PC-3 (cell line): ENCODE measurements at regions of chr5 and their contacts with region 1.

Region 1: GRCh38 chr5:157743163-157744050 is at the start of gene LSM11:
- DNase-seq: peak; percentile 97
- ATAC-seq: peak; percentile 88
- H3K4me3 ChIP-seq: peak within 1 kb of the TSS; percentile 89
- H3K27ac ChIP-seq: no peak within 1 kb of the TSS
- H3K4me1 ChIP-seq: peaks cover 28% of the 10 kb centered on the region
- H3K27me3 ChIP-seq: no peaks in the 10 kb centered on the region
- CTCF ChIP-seq: peak; percentile 100
- total RNA-seq, gene LSM11: 5.0 and 5.1 TPM in 2 replicates

Region 2: DNA sequence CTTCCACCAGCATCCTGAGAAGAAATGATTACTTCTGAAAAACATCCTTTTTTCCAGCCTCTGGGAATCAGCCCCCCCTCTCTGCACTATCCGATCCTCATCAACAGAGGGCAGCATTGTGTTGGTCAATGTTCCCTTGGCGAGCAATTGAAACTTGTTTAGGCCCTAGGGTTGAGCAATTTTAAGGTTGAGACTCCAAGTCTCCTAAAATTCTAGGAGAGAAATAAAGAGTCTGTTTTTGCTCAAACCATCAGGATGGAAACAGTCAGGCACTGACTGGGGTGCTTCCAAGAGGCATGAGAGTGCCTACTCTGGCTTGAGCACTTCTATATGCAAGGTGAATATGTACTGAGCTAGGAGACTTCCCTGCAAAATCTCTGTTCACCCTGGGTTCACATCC is 489.9 kb before region 1 on chr5:
- CTCF ChIA-PET with region 1: no interaction called
- POLR2A ChIA-PET with region 1: interaction called, 15 read pairs
- intact Hi-C with region 1: loop called (anchors 10 kb)
- DNase-seq: peak; percentile 93
- ATAC-seq: peak; percentile 91
- H3K4me3 ChIP-seq: no peak overlapping the region
- H3K27ac ChIP-seq: no peak overlapping the region
- H3K4me1 ChIP-seq: no peaks in the 10 kb centered on the region
- H3K27me3 ChIP-seq: peaks cover 23% of the 10 kb centered on the region
- CTCF ChIP-seq: peak; percentile 99

Region 3: GRCh38 chr5:157366741-157367674 is 376.4 kb before region 1 on chr5:
- CTCF ChIA-PET with region 1: no interaction called
- POLR2A ChIA-PET with region 1: no interaction called
- intact Hi-C with region 1: loop called (anchors 2 kb)
- DNase-seq: peak; percentile 86
- ATAC-seq: peak; percentile 72
- H3K4me3 ChIP-seq: no peak overlapping the region
- H3K27ac ChIP-seq: 0 out of 2 replicates have a peak overlapping the region, but pooled peaks have one; percentile 1
- H3K4me1 ChIP-seq: peaks cover 33% of the 10 kb centered on the region
- H3K27me3 ChIP-seq: no peaks in the 10 kb centered on the region
- CTCF ChIP-seq: peak; percentile 98

Region 4: DNA sequence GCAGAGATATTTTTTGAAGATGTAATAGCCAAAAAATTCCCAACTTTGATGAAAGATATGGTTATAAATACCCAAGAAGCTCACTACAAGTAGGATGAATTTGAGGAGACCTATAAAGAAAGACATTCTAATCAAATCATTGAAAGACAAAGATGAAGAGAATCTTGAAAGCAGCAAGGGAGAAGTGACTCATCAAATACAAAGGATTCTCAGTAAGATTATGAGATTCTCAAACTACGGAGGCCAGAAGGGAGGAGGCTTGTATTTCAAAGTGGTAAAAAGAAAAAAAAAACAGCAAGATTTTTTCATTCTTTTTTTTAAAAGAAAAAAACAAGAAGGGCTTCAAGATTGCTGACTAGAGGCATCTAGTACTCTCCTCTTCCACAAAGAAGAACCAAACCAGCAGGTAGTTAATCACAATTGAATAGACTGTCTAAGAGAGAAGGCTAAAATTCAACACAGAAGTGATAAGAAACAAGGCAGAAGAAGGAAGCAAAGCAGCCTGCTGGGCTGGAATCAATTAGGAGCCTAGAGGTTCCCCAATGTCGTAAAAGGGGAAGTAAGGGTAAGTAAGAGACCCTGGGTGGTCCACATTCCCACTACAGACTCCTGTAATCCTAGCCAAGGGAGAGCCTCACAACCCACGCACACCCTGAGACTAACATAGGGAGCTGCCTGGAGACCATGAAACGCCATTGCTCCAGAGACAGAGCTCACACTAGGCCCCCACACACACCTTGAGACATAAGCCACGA is 342.5 kb before region 1 on chr5:
- CTCF ChIA-PET with region 1: no interaction called
- POLR2A ChIA-PET with region 1: no interaction called
- intact Hi-C with region 1: no loop called
- DNase-seq: no peak
- ATAC-seq: 0 out of 2 replicates have a peak, but pooled peaks have one; percentile 37
- H3K4me3 ChIP-seq: no peak overlapping the region
- H3K27ac ChIP-seq: no peak overlapping the region
- H3K4me1 ChIP-seq: no peaks in the 10 kb centered on the region
- H3K27me3 ChIP-seq: no peaks in the 10 kb centered on the region
- CTCF ChIP-seq: no peak

Region 5: GRCh38 chr5:157476702-157477408 is 266.6 kb before region 1 on chr5:
- CTCF ChIA-PET with region 1: interaction called, 3 read pairs
- POLR2A ChIA-PET with region 1: no interaction called
- intact Hi-C with region 1: loop called (anchors 1 kb)
- DNase-seq: peak; percentile 91
- ATAC-seq: peak; percentile 41
- H3K4me3 ChIP-seq: no peak overlapping the region
- H3K27ac ChIP-seq: no peak overlapping the region
- H3K4me1 ChIP-seq: peaks cover 36% of the 10 kb centered on the region
- H3K27me3 ChIP-seq: no peaks in the 10 kb centered on the region
- CTCF ChIP-seq: peak; percentile 99

Region 6: GRCh38 chr5:157603333-157604190 is 139.8 kb before region 1 on chr5:
- CTCF ChIA-PET with region 1: no interaction called
- POLR2A ChIA-PET with region 1: no interaction called
- intact Hi-C with region 1: loop called (anchors 5 kb)
- DNase-seq: peak; percentile 99
- ATAC-seq: peak; percentile 68
- H3K4me3 ChIP-seq: peak overlapping the region; percentile 39
- H3K27ac ChIP-seq: peak overlapping the region; percentile 96
- H3K4me1 ChIP-seq: peaks cover 71% of the 10 kb centered on the region
- H3K27me3 ChIP-seq: no peaks in the 10 kb centered on the region
- CTCF ChIP-seq: no peak

Region 7: GRCh38 chr5:157731272-157732129 is 11.9 kb before region 1 on chr5 and contains the start of gene THG1L:
- CTCF ChIA-PET with region 1: interaction called, 9 read pairs
- POLR2A ChIA-PET with region 1: no interaction called
- intact Hi-C with region 1: loop called (anchors 1 kb)
- DNase-seq: peak; percentile 100
- ATAC-seq: peak; percentile 99
- H3K4me3 ChIP-seq: peak within 1 kb of the TSS; percentile 78
- H3K27ac ChIP-seq: peak within 1 kb of the TSS; percentile 82
- H3K4me1 ChIP-seq: peaks cover 15% of the 10 kb centered on the region
- H3K27me3 ChIP-seq: no peaks in the 10 kb centered on the region
- CTCF ChIP-seq: no peak
- total RNA-seq, gene THG1L: 45.1 and 45.3 TPM in 2 replicates

Region 8: DNA sequence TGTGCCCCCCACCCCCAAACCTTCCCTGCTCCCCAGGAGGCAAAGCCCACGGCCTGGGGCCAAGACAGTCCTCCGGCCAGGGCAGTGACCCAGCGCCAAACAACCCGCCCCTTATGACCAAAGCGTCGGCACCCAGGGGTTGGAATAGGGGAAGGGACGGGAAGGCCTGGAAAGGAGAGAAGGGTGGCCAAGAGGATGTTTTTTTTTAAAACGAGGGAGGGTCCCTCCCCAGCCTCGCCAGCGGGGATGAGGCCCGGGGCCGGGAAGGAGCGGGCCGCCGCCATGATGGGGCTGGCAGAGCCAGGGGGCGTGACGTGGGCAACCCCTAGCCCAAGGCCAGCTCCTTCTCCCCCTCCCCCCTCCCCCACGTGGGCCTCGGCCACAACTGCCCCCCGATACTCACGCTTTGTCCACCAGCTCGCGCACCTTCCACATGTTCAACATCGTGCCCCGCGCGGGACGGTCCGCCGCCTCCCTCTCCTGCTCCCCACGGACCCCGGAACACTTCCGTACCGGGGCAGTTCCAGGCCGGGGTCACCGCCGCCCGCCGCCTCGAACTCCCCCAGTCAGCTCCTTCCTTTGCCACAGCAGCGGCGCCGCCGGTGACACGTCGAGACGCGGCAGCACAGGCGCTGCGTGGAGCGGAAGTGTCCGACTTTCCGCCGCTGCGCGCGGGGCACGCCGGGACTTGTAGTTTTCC is 115.3 kb after region 1 on chr5 and contains the start of gene CLINT1:
- CTCF ChIA-PET with region 1: interaction called, 16 read pairs
- POLR2A ChIA-PET with region 1: no interaction called
- intact Hi-C with region 1: loop called (anchors 5 kb)
- DNase-seq: peak; percentile 98
- ATAC-seq: peak; percentile 96
- H3K4me3 ChIP-seq: peak within 1 kb of the TSS; percentile 93
- H3K27ac ChIP-seq: peak within 1 kb of the TSS; percentile 41
- H3K4me1 ChIP-seq: peaks cover 19% of the 10 kb centered on the region
- H3K27me3 ChIP-seq: no peaks in the 10 kb centered on the region
- CTCF ChIP-seq: no peak
- total RNA-seq, gene CLINT1: 125 and 131 TPM in 2 replicates

Region 9: DNA sequence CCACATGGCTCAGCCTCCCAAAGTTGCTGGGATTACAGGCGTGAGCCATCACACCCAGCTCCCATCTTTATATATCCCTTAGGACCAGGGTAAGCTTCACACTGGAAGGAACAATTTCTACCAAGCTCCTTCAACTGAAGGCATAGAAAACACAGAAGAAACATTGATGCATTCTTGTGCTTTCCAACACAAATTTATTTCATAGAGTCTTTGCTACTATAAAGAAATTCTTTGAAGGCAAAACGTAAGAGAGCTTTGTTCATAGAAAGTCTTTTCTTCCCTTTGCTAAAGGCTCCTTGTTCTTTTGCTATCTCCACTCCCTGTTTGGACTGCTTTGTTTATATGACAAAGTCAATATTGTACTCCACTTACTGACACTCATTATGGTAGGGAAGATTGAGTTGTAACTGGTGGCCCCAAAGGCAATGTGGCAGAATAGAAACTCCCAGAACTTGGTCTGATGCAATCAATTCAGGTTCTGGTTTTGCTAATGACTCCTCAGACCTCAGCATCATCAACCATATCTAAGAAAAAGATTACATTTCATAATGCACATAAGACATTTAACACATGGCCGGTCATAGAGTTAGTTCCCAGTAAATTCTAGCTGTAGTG is 213.0 kb after region 1 on chr5:
- CTCF ChIA-PET with region 1: no interaction called
- POLR2A ChIA-PET with region 1: no interaction called
- intact Hi-C with region 1: no loop called
- DNase-seq: no peak
- ATAC-seq: no peak
- H3K4me3 ChIP-seq: no peak overlapping the region
- H3K27ac ChIP-seq: no peak overlapping the region
- H3K4me1 ChIP-seq: no peaks in the 10 kb centered on the region
- H3K27me3 ChIP-seq: peaks cover 34% of the 10 kb centered on the region
- CTCF ChIP-seq: no peak